PC-3 (cell line): ENCODE measurements at regions of chr1 and their contacts with region 1.

Region 1: GRCh38 chr1:35641233-35641866 is at the start of gene PSMB2:
- DNase-seq: peak; percentile 98
- ATAC-seq: peak; percentile 86
- H3K4me3 ChIP-seq: peak within 1 kb of the TSS; percentile 95
- H3K27ac ChIP-seq: peak within 1 kb of the TSS; percentile 79
- H3K4me1 ChIP-seq: peaks cover 22% of the 10 kb centered on the region
- H3K27me3 ChIP-seq: no peaks in the 10 kb centered on the region
- CTCF ChIP-seq: no peak
- total RNA-seq, gene PSMB2: 61.2 and 88.7 TPM in 2 replicates

Region 2: GRCh38 chr1:35488336-35488735 is 153.0 kb before region 1 on chr1:
- CTCF ChIA-PET with region 1: no interaction called
- POLR2A ChIA-PET with region 1: no interaction called
- intact Hi-C with region 1: no loop called
- DNase-seq: no peak
- ATAC-seq: no peak
- H3K4me3 ChIP-seq: no peak overlapping the region
- H3K27ac ChIP-seq: no peak overlapping the region
- H3K4me1 ChIP-seq: no peaks in the 10 kb centered on the region
- H3K27me3 ChIP-seq: no peaks in the 10 kb centered on the region
- CTCF ChIP-seq: no peak

Region 3: DNA sequence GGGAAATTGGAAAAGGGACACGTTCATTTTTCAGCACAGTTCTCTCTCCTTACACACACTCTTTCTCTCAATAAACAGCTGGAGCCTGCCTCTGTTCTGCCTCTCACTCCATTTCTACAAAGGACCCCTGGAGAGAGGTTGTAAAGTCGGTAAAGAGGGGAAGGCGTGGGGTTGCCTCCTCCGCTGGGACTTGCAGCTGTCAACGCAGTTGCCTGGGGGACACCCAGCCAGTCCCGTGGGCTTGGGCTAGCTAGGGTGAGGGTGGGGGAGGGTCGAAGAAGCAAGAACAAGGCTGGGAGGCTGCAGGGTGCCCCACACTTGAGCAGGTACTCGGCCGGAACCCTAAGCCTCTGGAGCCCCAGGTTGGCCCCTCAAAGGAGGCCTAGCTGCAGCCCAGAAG is 49.7 kb after region 1 on chr1:
- CTCF ChIA-PET with region 1: no interaction called
- POLR2A ChIA-PET with region 1: no interaction called
- intact Hi-C with region 1: no loop called
- DNase-seq: no peak
- ATAC-seq: no peak
- H3K4me3 ChIP-seq: no peak overlapping the region
- H3K27ac ChIP-seq: no peak overlapping the region
- H3K4me1 ChIP-seq: no peaks in the 10 kb centered on the region
- H3K27me3 ChIP-seq: peaks cover 38% of the 10 kb centered on the region
- CTCF ChIP-seq: no peak

Region 4: GRCh38 chr1:35715568-35716002 is 74.2 kb after region 1 on chr1:
- CTCF ChIA-PET with region 1: interaction called, 7 read pairs
- POLR2A ChIA-PET with region 1: no interaction called
- intact Hi-C with region 1: loop called (anchors 5 kb)
- DNase-seq: peak; percentile 79
- ATAC-seq: peak; percentile 47
- H3K4me3 ChIP-seq: no peak overlapping the region
- H3K27ac ChIP-seq: no peak overlapping the region
- H3K4me1 ChIP-seq: peaks cover 23% of the 10 kb centered on the region
- H3K27me3 ChIP-seq: no peaks in the 10 kb centered on the region
- CTCF ChIP-seq: peak; percentile 92